ENCODE measurements at regions of chr13 and their contacts with region 1.

Region 1: DNA sequence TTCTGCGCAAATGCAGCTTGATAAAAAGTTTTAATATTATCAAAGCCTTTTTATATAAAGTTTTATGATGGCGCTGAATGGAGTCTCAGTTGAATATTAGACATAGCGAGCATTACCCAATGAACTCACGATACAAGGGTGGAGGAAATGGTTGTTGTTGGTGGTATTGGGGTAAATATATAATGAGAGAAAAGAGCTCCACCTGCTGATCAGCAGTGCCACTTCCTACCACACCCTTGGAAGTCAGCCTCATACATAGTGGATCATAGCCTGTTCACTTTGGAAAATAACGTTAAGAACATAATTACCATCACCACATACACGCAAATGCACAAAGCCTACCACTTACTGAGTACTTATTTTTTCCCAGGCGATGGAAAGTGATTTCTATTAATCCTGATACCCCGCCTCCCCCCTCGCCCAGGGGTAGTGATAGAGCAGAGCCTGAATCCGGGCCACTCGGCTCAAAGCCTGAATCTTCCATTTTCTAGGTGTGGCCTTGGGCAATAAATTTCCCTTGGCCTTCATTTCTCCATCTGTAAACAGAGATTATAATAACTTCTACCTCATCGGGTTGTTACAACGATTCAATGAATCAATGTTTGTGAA is 358.3 kb downstream of the KLF5 start:
- DNase-seq: peak; percentile 46
- ATAC-seq: peak; percentile 75
- H3K4me3 ChIP-seq: no peak overlapping the region
- H3K27ac ChIP-seq: no peak overlapping the region
- H3K4me1 ChIP-seq: peaks cover 9 to 45% of the 10 kb centered on the region in 2 experiments
- H3K27me3 ChIP-seq: no peaks in the 10 kb centered on the region
- CTCF ChIP-seq: peak; percentile 34 to 58 (median 57); a peak in 5 of 6 replicates
- POLR2A ChIP-seq: no peak
- RAD21 ChIP-seq: peak; percentile 70

Region 2: DNA sequence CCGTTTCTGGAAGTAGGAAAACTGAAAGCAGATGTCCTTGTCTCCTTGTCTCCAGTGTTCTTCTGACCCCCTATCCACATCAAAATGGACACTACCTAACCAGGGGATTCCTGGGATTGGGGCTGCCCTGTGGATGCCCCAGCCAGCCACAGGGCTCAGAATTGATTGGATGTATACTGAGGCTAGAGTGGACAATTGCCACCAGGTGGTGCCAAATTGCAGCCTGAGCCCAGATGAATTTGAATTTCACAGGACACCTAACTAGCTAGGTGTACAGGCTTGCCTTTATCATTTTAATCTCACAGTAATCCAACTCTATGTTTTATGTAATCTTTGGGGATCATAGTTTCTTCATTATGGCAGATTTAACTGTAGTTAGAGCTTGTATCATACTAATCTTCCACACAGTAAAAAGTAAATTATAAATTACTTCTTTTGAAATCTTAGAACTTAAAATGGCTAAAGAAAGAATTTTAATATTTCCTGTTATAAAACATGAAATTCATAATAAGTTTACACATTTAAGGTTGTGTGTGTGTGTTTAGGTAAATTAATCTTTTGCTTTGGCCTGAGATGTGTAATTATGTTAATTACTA is 577.2 kb before region 1 on chr13:
- CTCF ChIA-PET with region 1: interaction called, 4 read pairs
- POLR2A ChIA-PET with region 1: no interaction called
- RAD21 ChIA-PET with region 1: interaction called in 1 of 2 experiments, 3 read pairs
- intact Hi-C with region 1: loop called (anchors 1 kb)
- DNase-seq: peak; percentile 47
- ATAC-seq: peak; percentile 100
- H3K4me3 ChIP-seq: no peak overlapping the region
- H3K27ac ChIP-seq: no peak overlapping the region
- H3K4me1 ChIP-seq: peaks cover 0 to 5% of the 10 kb centered on the region in 2 experiments; a peak in 1 of 4 replicates
- H3K27me3 ChIP-seq: no peaks in the 10 kb centered on the region
- CTCF ChIP-seq: peak; percentile 53 to 88 (median 78); a peak in 5 of 6 replicates
- POLR2A ChIP-seq: no peak
- RAD21 ChIP-seq: peak; percentile 91

Region 3: DNA sequence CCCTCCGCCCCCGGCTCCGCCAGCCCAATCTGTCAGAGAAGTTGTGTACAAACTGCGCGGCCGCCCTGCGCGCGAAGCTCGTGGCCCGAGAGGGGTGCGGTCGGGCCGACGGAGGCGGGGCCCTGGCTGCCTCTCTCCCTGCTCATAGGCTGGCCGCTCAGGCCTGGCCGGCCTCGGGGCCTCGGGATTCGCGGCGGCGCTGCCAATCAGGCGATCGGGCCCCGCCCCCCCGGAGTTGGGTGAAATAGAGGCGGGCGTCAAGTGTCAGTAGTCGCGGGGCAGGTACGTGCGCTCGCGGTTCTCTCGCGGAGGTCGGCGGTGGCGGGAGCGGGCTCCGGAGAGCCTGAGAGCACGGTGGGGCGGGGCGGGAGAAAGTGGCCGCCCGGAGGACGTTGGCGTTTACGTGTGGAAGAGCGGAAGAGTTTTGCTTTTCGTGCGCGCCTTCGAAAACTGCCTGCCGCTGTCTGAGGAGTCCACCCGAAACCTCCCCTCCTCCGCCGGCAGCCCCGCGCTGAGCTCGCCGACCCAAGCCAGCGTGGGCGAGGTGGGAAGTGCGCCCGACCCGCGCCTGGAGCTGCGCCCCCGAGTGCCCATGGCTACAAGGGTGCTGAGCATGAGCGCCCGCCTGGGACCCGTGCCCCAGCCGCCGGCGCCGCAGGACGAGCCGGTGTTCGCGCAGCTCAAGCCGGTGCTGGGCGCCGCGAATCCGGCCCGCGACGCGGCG is 358.2 kb before region 1 on chr13 and contains the start of gene KLF5:
- CTCF ChIA-PET with region 1: interaction called, 3 read pairs
- POLR2A ChIA-PET with region 1: interaction called, 5 read pairs
- RAD21 ChIA-PET with region 1: interaction called in 1 of 2 experiments, 5 read pairs
- intact Hi-C with region 1: loop called (anchors 2 kb)
- DNase-seq: peak; percentile 94
- ATAC-seq: peak; percentile 91
- H3K4me3 ChIP-seq: peak within 1 kb of the TSS; percentile 75 to 86
- H3K27ac ChIP-seq: peak within 1 kb of the TSS; percentile 83
- H3K4me1 ChIP-seq: peaks cover 34 to 61% of the 10 kb centered on the region in 2 experiments
- H3K27me3 ChIP-seq: no peaks in the 10 kb centered on the region
- CTCF ChIP-seq: no peak
- POLR2A ChIP-seq: peak; percentile 94
- RAD21 ChIP-seq: 0 out of 2 replicates have a peak, but pooled peaks have one; percentile 4
- total RNA-seq, gene KLF5: 59.2 TPM

Region 4: DNA sequence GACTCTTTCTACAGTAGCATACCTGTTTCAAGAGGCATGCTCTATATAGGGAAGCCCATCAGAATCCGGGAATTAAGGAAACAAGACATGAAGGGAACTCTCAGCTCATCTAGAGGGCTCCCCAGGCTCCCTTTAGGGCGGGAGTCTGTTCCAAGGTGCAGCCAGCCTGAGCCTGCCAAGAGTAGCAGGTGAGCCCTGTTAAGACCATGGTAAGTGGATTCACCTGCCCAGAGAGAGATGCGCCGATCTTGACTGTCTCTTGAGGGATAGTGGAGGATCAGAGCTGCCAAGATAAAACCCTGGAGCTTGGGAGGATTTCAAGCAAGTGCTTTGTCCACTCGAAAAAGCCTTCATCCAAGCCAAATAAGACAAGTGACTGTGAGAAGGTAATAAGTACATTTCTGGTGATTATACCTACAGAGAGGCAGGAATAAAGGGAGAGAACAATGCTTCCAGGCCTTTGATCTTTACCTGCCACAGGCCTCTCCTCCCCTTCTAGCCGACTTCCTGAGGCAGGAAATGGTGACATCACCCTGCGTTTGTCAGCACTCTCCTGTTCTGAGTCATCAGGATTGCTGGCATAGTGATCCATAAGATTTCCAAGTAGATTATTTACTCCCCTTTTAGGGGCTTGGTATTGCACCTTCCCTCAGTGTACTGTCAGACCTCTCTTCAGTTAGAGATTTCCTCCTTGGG is 326.9 kb before region 1 on chr13:
- CTCF ChIA-PET with region 1: no interaction called
- POLR2A ChIA-PET with region 1: no interaction called
- RAD21 ChIA-PET with region 1: no interaction called
- intact Hi-C with region 1: loop called (anchors 5 kb)
- DNase-seq: peak; percentile 96
- ATAC-seq: peak; percentile 91
- H3K4me3 ChIP-seq: peak overlapping the region; percentile 7 to 22; a peak in 3 of 4 replicates
- H3K27ac ChIP-seq: peak overlapping the region; percentile 93
- H3K4me1 ChIP-seq: peaks cover 26 to 46% of the 10 kb centered on the region in 2 experiments
- H3K27me3 ChIP-seq: no peaks in the 10 kb centered on the region
- CTCF ChIP-seq: no peak
- POLR2A ChIP-seq: no peak
- RAD21 ChIP-seq: peak; percentile 26; the same call in 1 of the 2 replicates

Region 5: DNA sequence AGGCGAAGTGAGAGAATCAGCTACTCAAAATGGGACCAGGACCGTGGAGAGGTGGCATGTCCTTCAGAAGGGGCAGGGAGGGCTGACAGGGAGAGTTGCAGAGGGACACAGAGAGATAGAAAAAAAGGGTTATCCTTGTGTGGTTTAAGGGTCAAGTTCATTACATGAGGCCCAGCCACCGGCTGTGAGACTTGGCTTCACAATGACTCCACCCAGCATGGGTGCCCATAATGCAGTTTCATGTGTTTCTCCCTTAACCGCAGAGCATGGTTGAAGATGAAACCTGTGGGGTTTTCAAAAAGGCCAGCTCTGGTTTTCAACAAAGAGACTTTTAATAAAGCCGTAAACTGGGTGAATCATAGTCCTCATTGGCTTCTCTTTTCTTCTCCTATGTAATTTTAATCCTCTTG is 193.7 kb before region 1 on chr13:
- CTCF ChIA-PET with region 1: no interaction called
- POLR2A ChIA-PET with region 1: no interaction called
- RAD21 ChIA-PET with region 1: no interaction called
- intact Hi-C with region 1: loop called (anchors 10 kb)
- DNase-seq: no peak
- ATAC-seq: no peak
- H3K4me3 ChIP-seq: no peak overlapping the region
- H3K27ac ChIP-seq: no peak overlapping the region
- H3K4me1 ChIP-seq: peaks cover 1 to 19% of the 10 kb centered on the region in 2 experiments; a peak in 1 of 4 replicates
- H3K27me3 ChIP-seq: no peaks in the 10 kb centered on the region
- CTCF ChIP-seq: no peak
- POLR2A ChIP-seq: no peak
- RAD21 ChIP-seq: no peak

Measured in HCT116 (cell line).